ENCODE measurements at regions of chr19 and their contacts with region 1.

Region 1: GRCh38 chr19:6767357-6768235 is at the start of gene SH2D3A:
- DNase-seq: peak; percentile 15
- ATAC-seq: peak; percentile 65
- H3K4me3 ChIP-seq: no peak within 1 kb of the TSS
- H3K27ac ChIP-seq: no peak within 1 kb of the TSS
- H3K4me1 ChIP-seq: no peaks in the 10 kb centered on the region
- H3K27me3 ChIP-seq: no peaks in the 10 kb centered on the region; the same call in 1 of the 2 replicates
- CTCF ChIP-seq: no peak
- POLR2A ChIP-seq: no peak
- RAD21 ChIP-seq: no peak
- total RNA-seq, gene SH2D3A: under 0.01 TPM in 1 of 2 replicates, not detected in the other

Region 2: GRCh38 chr19:6521718-6522646 is 245.6 kb before region 1 on chr19:
- CTCF ChIA-PET with region 1: no interaction called
- POLR2A ChIA-PET with region 1: interaction called, 13 read pairs
- dilution Hi-C with region 1: no loop called
- in situ Hi-C with region 1: no loop called
- intact Hi-C with region 1: no loop called
- DNase-seq: no peak
- ATAC-seq: no peak
- H3K4me3 ChIP-seq: no peak overlapping the region
- H3K27ac ChIP-seq: no peak overlapping the region
- H3K4me1 ChIP-seq: no peaks in the 10 kb centered on the region
- H3K27me3 ChIP-seq: no peaks in the 10 kb centered on the region
- CTCF ChIP-seq: no peak
- POLR2A ChIP-seq: no peak
- RAD21 ChIP-seq: no peak

Measured in IMR-90 (cell line).